ENCODE measurements at regions of chr16 and their contacts with region 1.

Region 1: DNA sequence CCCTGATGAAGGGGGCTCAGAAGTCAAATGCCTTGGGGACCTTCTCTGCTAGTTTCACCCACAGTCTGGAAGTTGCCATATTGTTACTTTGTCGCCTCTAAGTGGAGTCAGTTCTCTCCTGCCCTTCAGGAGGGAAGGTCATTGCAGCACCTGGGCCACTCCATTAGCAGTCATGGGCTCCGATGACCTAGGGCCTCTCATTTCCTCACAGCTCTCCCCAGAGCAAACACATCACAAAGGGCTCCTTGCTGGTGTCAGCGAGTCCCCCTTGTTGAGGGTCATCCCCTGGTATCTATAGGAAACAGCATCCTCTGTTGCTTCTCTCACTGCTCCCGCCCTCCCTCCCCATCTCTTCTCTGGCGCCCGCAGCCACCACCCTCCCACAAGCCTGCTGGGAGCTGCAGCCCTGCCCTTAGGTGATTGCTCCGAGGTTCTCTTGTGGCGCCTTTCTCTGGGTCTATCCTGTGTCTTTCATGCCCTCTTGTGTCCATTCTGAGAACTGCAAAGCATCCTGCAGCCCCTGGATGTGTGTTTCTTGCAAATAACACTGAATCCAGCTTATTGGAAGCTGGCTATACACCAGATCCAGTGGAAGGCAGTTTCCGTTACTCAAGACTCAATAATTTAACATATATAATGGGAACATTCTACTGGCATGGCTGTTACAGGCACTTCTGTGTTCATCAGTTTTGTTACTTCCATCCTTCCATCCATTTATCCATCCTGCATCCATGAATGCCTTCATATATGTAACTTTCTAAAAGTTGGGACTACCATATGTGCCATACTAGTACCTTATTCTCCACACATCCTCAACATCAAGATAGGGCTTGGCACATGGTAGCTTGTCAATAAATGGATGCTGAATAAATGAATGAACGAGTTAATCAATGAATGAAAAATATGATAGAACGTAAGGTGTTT is 21.2 kb downstream of the PDILT start:
- DNase-seq: peak in 2 of 3 donors; percentile 50 to 80
- ATAC-seq: peak; percentile 92
- H3K4me3 ChIP-seq: no peak overlapping the region
- H3K4me1 ChIP-seq: no peaks in the 10 kb centered on the region
- CTCF ChIP-seq: peak; percentile 63

Region 2: DNA sequence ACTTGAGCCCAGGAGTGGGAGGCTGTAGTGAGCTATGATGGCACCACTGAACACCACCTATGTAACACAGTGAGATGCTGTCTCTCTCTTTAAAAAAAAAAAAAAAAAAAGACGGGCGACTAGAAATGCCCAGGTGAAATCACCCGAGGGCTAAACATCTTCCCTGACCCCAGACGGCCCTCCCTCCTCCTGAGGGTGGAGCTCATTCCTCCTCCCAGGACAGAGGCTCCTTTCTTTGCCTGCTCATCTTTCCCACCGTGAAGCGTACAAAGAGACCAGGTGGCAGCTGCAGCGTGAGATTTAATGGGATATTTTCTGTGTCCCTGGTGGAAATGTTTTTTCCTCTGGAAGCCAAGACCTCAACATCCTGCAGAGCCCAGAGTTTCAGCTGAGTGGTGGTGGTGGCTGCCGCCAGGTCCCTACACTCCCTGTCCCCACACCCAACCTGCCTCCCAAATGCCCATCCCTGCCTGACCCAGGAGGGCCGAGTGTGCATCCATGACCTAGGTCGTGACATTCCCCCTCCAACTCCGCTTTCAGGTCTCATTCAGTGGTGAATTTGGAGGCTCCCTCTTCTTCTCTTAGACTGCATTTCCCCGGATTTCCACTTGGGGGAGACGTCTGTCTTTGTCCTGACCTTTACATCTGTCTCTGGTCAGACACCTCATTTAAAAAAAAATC is 484.3 kb before region 1 on chr16:
- intact Hi-C with region 1: loop called in 1 of 2 experiments (anchors 5 kb)
- DNase-seq: peak in 1 of 3 donors; percentile 74
- ATAC-seq: peak; percentile 70
- H3K4me3 ChIP-seq: no peak overlapping the region
- H3K4me1 ChIP-seq: no peaks in the 10 kb centered on the region
- CTCF ChIP-seq: peak; percentile 19

Region 3: DNA sequence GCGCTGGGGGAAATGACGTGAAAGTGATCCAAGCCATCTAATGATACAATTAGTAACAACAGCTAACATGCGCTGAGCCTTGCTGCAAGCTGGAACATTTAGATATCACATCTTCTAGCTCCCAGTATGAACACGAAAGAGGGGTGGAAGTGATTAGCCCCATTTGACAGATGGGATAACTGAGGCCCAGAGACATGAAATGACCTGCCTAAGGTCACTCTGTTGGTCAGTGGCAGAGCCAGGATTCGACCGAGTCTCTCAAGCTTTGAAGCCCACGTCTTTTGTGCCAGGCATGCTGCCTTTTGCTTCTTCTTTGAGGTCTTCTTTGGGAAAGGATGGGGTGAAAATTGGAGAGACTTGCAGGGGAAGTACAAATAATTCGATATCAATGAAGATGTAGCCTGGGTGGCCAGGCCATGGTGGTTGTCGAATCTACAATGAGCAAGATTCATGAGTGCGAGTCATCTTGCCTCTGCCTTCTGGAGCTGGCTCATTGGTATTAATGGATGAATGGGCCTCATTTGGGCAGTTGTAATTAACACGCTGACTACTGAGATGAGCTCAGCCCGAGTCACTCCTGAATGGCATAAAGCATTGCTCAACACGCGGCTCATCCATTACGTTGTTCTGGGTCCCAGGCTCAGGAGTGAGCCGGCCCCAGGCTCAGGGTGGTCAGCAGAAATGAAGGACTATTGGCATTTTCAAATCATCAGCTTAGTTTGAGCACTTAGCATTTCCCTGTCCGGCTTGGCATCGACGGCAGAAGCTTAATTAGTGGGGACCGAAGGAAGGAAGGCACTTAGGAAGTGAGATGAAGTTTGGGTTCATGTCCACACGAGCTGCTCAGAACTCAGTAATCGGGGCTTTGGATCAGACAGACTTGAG is 470.7 kb before region 1 on chr16:
- intact Hi-C with region 1: loop called in 1 of 2 experiments (anchors 10 kb)
- DNase-seq: no peak
- ATAC-seq: no peak
- H3K4me3 ChIP-seq: no peak overlapping the region
- H3K4me1 ChIP-seq: no peaks in the 10 kb centered on the region
- CTCF ChIP-seq: no peak

Region 4: DNA sequence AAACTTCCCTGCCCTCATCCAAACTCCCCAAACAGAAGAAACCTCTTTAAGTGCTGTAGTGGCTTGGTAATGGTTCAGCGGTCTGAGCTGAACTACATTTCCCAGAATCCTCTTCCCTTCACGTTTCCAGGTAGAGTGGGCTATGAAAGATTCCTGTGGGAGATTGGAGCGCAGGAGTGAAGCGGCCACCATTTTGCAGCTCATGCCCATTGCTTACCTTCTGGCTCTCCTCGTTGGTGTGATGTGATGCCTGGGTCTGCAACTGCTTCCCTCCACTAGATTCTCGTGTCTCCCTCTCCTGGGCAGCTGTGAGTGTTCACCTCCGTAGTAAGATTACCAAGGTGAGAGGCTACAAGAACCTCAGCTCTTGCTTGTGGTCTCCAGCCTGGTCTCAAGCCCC is 391.8 kb before region 1 on chr16:
- intact Hi-C with region 1: no loop called
- DNase-seq: no peak
- ATAC-seq: no peak
- H3K4me3 ChIP-seq: no peak overlapping the region
- H3K4me1 ChIP-seq: no peaks in the 10 kb centered on the region
- CTCF ChIP-seq: no peak

Measured in mucosa of descending colon (tissue), 3 donors.